Activated CD4-positive, alpha-beta memory T cell treated with anti-CD3 and anti-CD28 coated beads, Interleukin-2, amount 10 ng/mL, durations not matched to agents 7 days and 5 days (primary cell): ENCODE measurements at regions of chr2 and their contacts with region 1.

Region 1: GRCh38 chr2:46364797-46365457 is 67.7 kb downstream of the EPAS1 start:
- DNase-seq: peak; percentile 41
- H3K4me3 Mint-ChIP-seq: no peak overlapping the region
- H3K27ac Mint-ChIP-seq: no peak overlapping the region
- H3K4me1 Mint-ChIP-seq: peaks cover 56% of the 10 kb centered on the region
- H3K27me3 Mint-ChIP-seq: no peaks in the 10 kb centered on the region

Region 2: GRCh38 chr2:45993476-45993991 is 371.4 kb before region 1 on chr2:
- CTCF ChIA-PET with region 1: interaction called, 12 read pairs
- POLR2A ChIA-PET with region 1: no interaction called
- DNase-seq: peak; percentile 66
- H3K4me3 Mint-ChIP-seq: no peak overlapping the region
- H3K27ac Mint-ChIP-seq: no peak overlapping the region
- H3K4me1 Mint-ChIP-seq: peaks cover 7% of the 10 kb centered on the region
- H3K27me3 Mint-ChIP-seq: no peaks in the 10 kb centered on the region

Region 3: GRCh38 chr2:46010925-46011490 is 353.9 kb before region 1 on chr2:
- CTCF ChIA-PET with region 1: interaction called, 17 read pairs
- POLR2A ChIA-PET with region 1: interaction called, 5 read pairs
- DNase-seq: peak; percentile 10
- H3K4me3 Mint-ChIP-seq: no peak overlapping the region
- H3K27ac Mint-ChIP-seq: peak overlapping the region; percentile 2
- H3K4me1 Mint-ChIP-seq: peaks cover 54% of the 10 kb centered on the region
- H3K27me3 Mint-ChIP-seq: no peaks in the 10 kb centered on the region

Region 4: DNA sequence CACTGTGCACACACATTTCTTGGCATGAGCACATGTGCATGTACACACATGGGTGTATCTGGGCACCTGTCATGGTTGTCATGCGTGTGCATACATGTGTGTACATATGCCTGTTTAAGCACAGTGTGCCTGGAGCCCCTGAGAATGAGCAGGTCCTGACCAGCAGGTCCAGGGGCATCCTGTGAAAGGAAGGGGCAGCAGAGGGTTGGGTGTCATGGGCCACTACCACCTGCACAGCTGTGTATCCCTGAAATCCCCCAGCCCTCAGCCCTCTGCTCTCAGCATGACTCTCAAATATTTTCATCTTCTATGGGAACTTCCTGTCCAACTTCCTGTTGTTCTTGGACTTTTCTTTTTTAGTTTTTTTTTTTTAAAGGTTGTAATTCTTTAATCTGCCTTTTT is 164.7 kb before region 1 on chr2:
- CTCF ChIA-PET with region 1: no interaction called
- POLR2A ChIA-PET with region 1: no interaction called
- DNase-seq: no peak
- H3K4me3 Mint-ChIP-seq: no peak overlapping the region
- H3K27ac Mint-ChIP-seq: peak overlapping the region; percentile 64
- H3K4me1 Mint-ChIP-seq: peaks cover 48% of the 10 kb centered on the region
- H3K27me3 Mint-ChIP-seq: peaks cover 3% of the 10 kb centered on the region

Region 5: DNA sequence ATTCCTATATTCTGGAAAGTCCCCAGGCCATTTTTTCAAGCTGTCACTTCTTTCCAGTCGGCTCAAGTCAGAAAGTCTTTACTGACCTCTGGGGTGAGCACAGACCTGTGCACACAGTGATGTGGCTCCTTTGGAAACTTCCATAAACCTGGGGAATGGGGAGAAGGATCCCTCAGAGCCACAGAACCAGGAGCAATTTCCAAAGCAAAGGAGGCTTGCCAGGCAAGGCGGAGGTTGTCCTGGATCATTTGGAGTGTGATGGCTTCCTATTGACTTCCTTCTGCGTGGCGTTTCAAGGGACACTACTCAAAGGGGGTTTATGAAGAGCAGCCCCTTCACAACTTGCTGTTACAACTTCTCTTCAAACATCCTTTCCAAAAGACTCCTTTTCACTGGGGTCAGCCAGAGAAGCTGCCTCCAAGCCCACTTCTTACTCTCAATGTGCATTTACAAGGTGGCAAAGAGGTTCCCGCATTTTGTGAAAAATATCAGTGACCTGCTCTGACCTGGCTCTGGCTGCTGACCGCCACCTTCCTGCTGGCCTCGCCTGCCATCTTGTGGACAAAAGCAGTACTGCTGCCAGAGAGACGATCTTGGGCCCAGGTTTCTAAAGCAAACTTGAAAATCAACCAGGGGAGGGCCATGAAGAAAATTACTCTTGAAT is 96.2 kb after region 1 on chr2:
- CTCF ChIA-PET with region 1: interaction called, 12 read pairs
- POLR2A ChIA-PET with region 1: no interaction called
- DNase-seq: peak; percentile 81
- H3K4me3 Mint-ChIP-seq: no peak overlapping the region
- H3K27ac Mint-ChIP-seq: no peak overlapping the region
- H3K4me1 Mint-ChIP-seq: peaks cover 16% of the 10 kb centered on the region
- H3K27me3 Mint-ChIP-seq: no peaks in the 10 kb centered on the region